WTC11 (cell line): ENCODE measurements at regions of chr12 and their contacts with region 1.

Region 1: GRCh38 chr12:8860165-8860961 is 37.9 kb downstream of the A2ML1 start:
- DNase-seq: peak; percentile 64
- ATAC-seq: peak; percentile 98
- H3K4me3 Mint-ChIP-seq: no peak overlapping the region
- H3K27ac Mint-ChIP-seq: no peak overlapping the region
- H3K4me1 Mint-ChIP-seq: peaks cover 11% of the 10 kb centered on the region
- H3K27me3 Mint-ChIP-seq: no peaks in the 10 kb centered on the region
- CTCF ChIP-seq: peak; percentile 70

Region 2: DNA sequence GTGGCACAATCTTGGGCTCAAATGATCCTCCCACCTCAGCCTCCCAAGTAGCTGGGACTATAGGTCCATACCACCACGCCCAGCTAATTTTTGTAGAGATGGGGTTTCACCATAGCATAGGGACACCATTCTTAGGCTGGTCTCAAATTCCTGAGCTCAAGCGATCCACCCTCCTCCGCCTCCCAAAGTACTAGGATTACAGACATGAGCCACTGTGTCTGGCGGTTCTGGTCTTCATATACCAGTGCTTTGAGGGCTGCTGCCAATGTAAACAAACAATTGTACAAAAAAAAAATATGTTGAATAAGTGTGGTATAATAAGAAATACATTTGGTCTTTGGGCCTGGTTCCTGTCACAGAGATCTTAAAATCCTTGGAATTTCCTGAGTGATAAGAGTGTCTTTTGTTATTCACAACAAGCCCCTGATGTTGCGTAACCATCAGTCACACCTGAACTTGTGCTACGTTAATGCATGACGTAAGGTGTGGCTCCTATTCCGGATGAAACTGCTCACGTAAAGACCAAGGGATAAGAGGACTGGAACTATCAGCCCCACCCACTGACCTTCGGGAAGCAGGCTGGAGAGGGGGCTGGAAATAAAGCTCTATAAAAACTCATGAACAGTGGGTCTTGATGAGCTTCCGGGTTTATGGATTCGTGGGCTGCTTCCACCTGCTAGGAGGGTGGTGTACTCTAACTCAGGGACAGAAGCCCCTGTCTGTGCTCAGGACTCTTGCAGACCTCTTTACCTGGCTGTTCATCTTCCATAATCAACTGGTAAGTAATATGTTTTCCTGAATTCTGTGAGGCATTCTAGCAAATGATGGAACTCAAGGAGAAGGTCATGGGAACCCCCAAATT is 179.1 kb before region 1 on chr12:
- CTCF ChIA-PET with region 1: interaction called, 38 read pairs
- POLR2A ChIA-PET with region 1: interaction called, 3 read pairs
- DNase-seq: no peak
- ATAC-seq: peak; percentile 55
- H3K4me3 Mint-ChIP-seq: peak overlapping the region; percentile 64
- H3K27ac Mint-ChIP-seq: peak overlapping the region; percentile 93
- H3K4me1 Mint-ChIP-seq: peaks cover 30% of the 10 kb centered on the region
- H3K27me3 Mint-ChIP-seq: no peaks in the 10 kb centered on the region
- CTCF ChIP-seq: no peak

Region 3: GRCh38 chr12:8742501-8742900 is 117.9 kb before region 1 on chr12:
- CTCF ChIA-PET with region 1: no interaction called
- POLR2A ChIA-PET with region 1: no interaction called
- DNase-seq: no peak
- ATAC-seq: no peak
- H3K4me3 Mint-ChIP-seq: no peak overlapping the region
- H3K27ac Mint-ChIP-seq: peak overlapping the region; percentile 90
- H3K4me1 Mint-ChIP-seq: peaks cover 6% of the 10 kb centered on the region
- H3K27me3 Mint-ChIP-seq: no peaks in the 10 kb centered on the region
- CTCF ChIP-seq: no peak

Region 4: GRCh38 chr12:8834230-8834629 is 26.1 kb before region 1 on chr12:
- CTCF ChIA-PET with region 1: interaction called, 20 read pairs
- POLR2A ChIA-PET with region 1: interaction called, 3 read pairs
- DNase-seq: no peak
- ATAC-seq: no peak
- H3K4me3 Mint-ChIP-seq: no peak overlapping the region
- H3K27ac Mint-ChIP-seq: peak overlapping the region; percentile 13; the same call in 1 of the 2 replicates
- H3K4me1 Mint-ChIP-seq: peaks cover 65% of the 10 kb centered on the region
- H3K27me3 Mint-ChIP-seq: no peaks in the 10 kb centered on the region
- CTCF ChIP-seq: no peak

Region 5: DNA sequence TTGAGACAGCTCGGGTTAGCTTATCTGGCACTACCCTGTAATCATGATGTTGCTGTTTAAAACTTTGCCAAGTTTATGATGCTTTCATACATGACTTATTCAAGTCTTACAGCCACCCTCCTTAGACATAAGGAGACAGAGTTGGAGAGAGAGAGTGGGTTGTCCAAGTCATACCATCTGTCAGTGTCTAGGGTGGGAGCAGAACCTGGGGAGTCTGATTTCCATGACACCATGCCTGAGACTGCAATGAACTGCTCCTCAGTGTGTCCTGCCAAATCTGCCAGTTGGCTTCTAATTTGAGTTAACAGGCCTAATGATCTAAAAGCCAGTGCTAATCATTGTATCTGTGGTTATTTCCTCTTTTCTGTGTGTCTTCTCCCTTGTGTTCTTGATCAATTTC is 10.2 kb after region 1 on chr12:
- CTCF ChIA-PET with region 1: interaction called, 24 read pairs
- POLR2A ChIA-PET with region 1: no interaction called
- DNase-seq: no peak
- ATAC-seq: no peak
- H3K4me3 Mint-ChIP-seq: no peak overlapping the region
- H3K27ac Mint-ChIP-seq: no peak overlapping the region; the same call in 1 of the 2 replicates
- H3K4me1 Mint-ChIP-seq: no peaks in the 10 kb centered on the region; the same call in 1 of the 2 replicates
- H3K27me3 Mint-ChIP-seq: no peaks in the 10 kb centered on the region
- CTCF ChIP-seq: no peak

Region 6: GRCh38 chr12:8905546-8905945 is 45.2 kb after region 1 on chr12:
- CTCF ChIA-PET with region 1: interaction called, 10 read pairs
- POLR2A ChIA-PET with region 1: no interaction called
- DNase-seq: no peak
- ATAC-seq: peak; percentile 12; the same call in 1 of the 2 replicates
- H3K4me3 Mint-ChIP-seq: no peak overlapping the region; the same call in 1 of the 2 replicates
- H3K27ac Mint-ChIP-seq: peak overlapping the region; percentile 99
- H3K4me1 Mint-ChIP-seq: peaks cover 58% of the 10 kb centered on the region
- H3K27me3 Mint-ChIP-seq: no peaks in the 10 kb centered on the region
- CTCF ChIP-seq: no peak

Region 7: GRCh38 chr12:8941691-8942478 is 81.5 kb after region 1 on chr12:
- CTCF ChIA-PET with region 1: no interaction called
- POLR2A ChIA-PET with region 1: no interaction called
- DNase-seq: no peak
- ATAC-seq: no peak
- H3K4me3 Mint-ChIP-seq: no peak overlapping the region
- H3K27ac Mint-ChIP-seq: peak overlapping the region; percentile 44
- H3K4me1 Mint-ChIP-seq: peaks cover 6% of the 10 kb centered on the region
- H3K27me3 Mint-ChIP-seq: no peaks in the 10 kb centered on the region
- CTCF ChIP-seq: no peak

Region 8: GRCh38 chr12:9118158-9118557 is 257.8 kb after region 1 on chr12:
- CTCF ChIA-PET with region 1: no interaction called
- POLR2A ChIA-PET with region 1: no interaction called
- DNase-seq: no peak
- ATAC-seq: no peak
- H3K4me3 Mint-ChIP-seq: no peak overlapping the region
- H3K27ac Mint-ChIP-seq: no peak overlapping the region
- H3K4me1 Mint-ChIP-seq: peaks cover 17% of the 10 kb centered on the region
- H3K27me3 Mint-ChIP-seq: no peaks in the 10 kb centered on the region
- CTCF ChIP-seq: no peak